H1 (cell line): ENCODE measurements at regions of chr14 and their contacts with region 1.

Region 1: DNA sequence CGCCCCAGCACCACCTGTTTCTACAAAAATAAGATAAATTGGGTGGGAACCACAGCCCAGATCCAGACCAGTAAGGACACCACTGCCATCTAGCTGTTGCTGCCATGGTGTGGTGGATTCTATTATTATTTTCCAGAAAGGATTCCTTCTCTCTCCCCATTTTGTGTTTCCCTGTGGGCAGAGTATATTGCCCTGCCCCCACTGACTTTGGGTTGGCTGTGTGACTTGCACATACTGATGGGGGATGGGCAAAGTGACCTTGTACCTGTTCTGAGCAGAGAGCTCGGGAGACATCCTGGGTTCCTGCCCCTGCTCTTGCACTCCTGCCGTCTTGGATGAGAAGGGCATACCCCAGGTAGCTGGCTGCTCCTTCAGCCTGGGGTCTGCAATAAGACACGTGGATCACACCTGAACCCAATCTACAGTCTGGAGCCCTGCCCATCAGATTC is 24.3 kb downstream of the MOAP1 start:
- DNase-seq: no peak
- H3K4me3 ChIP-seq: no peak overlapping the region
- H3K27ac ChIP-seq: no peak overlapping the region
- H3K4me1 ChIP-seq: no peaks in the 10 kb centered on the region; a peak in 3 of 7 replicates
- H3K27me3 ChIP-seq: no peaks in the 10 kb centered on the region
- CTCF ChIP-seq: peak; percentile 53 to 61 (median 58)
- EP300 ChIP-seq: no peak
- POLR2A ChIP-seq: no peak
- RAD21 ChIP-seq: peak; percentile 64 to 75

Region 2: GRCh38 chr14:93146119-93146518 is 14.3 kb before region 1 on chr14:
- CTCF ChIA-PET with region 1: interaction called, 19 read pairs
- POLR2A ChIA-PET with region 1: no interaction called
- DNase-seq: no peak
- H3K4me3 ChIP-seq: no peak overlapping the region
- H3K27ac ChIP-seq: no peak overlapping the region
- H3K4me1 ChIP-seq: 0 out of 7 replicates have a peak, but pooled peaks cover 0 to 3% (median 0%) of the 10 kb centered on the region in 4 experiments
- H3K27me3 ChIP-seq: no peaks in the 10 kb centered on the region; a peak in 1 of 7 replicates
- CTCF ChIP-seq: no peak
- EP300 ChIP-seq: no peak
- POLR2A ChIP-seq: no peak
- RAD21 ChIP-seq: no peak

Region 3: GRCh38 chr14:93173943-93174395 is 13.6 kb after region 1 on chr14:
- CTCF ChIA-PET with region 1: interaction called, 48 read pairs
- POLR2A ChIA-PET with region 1: no interaction called
- DNase-seq: no peak
- H3K4me3 ChIP-seq: no peak overlapping the region
- H3K27ac ChIP-seq: no peak overlapping the region
- H3K4me1 ChIP-seq: no peaks in the 10 kb centered on the region
- H3K27me3 ChIP-seq: no peaks in the 10 kb centered on the region; a peak in 1 of 7 replicates
- CTCF ChIP-seq: no peak
- EP300 ChIP-seq: no peak
- POLR2A ChIP-seq: no peak
- RAD21 ChIP-seq: no peak

Region 4: GRCh38 chr14:93239869-93240677 is 79.7 kb after region 1 on chr14:
- CTCF ChIA-PET with region 1: no interaction called
- POLR2A ChIA-PET with region 1: no interaction called
- DNase-seq: no peak
- H3K4me3 ChIP-seq: no peak overlapping the region
- H3K27ac ChIP-seq: no peak overlapping the region
- H3K4me1 ChIP-seq: no peaks in the 10 kb centered on the region
- H3K27me3 ChIP-seq: no peaks in the 10 kb centered on the region
- CTCF ChIP-seq: no peak
- EP300 ChIP-seq: no peak
- POLR2A ChIP-seq: no peak
- RAD21 ChIP-seq: no peak